AG04449 (cell line): ENCODE measurements at regions of chr9 and their contacts with region 1.

Region 1: GRCh38 chr9:22119537-22120158 is 110.5 kb upstream of the CDKN2B start:
- DNase-seq: no peak
- H3K4me3 ChIP-seq: no peak overlapping the region
- CTCF ChIP-seq: peak; percentile 51

Region 2: DNA sequence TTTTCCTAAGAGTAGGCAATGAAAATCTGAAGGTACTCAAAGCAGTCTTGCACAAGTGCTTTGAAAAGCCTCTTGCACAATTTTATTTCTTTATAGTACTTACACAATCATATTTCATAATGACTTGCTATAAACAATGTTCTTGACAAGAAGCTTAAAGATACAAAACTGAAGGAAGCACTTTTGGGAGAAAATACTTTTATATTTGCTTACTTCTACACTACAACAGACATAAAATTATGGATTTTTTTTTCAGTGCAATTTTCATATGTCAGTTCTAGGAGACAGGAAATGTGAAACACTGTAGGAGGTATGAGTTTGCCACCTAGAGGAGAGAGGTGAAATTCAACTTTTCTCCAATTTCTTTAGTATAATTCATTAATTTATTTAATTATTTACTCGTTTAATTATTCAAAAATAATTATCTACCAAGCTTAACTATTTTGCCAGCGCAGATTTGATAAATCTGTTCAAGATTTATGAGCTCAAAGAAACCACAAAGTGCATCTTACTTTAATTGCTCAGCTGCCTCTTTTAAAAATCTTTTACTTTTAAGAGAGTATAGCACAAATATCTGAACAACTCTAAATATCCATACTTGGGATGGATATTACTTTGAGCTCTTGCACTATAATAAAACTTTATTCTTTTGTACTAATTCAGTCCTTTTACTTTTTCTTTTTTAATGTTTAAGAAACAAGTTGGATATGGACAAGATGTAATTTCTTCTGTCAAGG is 81.5 kb before region 1 on chr9:
- CTCF ChIA-PET with region 1: interaction called, 34 read pairs
- POLR2A ChIA-PET with region 1: no interaction called
- DNase-seq: no peak
- H3K4me3 ChIP-seq: no peak overlapping the region
- CTCF ChIP-seq: peak; percentile 9

Region 3: GRCh38 chr9:22052376-22052945 is 67.2 kb before region 1 on chr9:
- CTCF ChIA-PET with region 1: interaction called, 10 read pairs
- POLR2A ChIA-PET with region 1: no interaction called
- DNase-seq: peak; percentile 76
- H3K4me3 ChIP-seq: no peak overlapping the region
- CTCF ChIP-seq: no peak

Region 4: DNA sequence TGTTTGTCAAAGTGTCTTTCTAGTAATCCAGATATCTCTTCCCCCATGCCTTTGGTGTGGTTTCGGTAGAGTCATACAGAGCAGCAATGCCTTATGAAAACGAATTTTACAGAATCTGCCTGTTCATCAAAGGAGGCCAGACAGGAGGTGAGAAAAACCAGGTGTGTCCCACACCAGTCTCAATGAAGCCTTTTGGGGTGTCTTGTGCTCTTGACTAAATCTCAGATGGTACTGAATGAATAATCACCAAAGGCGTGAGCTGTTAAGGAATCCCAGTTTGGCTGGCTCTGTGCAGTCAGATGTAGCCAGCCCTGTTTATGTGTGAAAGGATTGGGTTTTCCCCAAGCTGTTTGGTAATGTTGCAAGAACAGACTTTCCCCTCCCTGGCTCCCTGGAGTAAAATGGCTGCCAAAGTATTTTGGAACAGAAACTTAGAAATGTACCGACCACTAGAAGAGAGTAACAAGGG is 39.7 kb before region 1 on chr9:
- CTCF ChIA-PET with region 1: no interaction called
- POLR2A ChIA-PET with region 1: no interaction called
- DNase-seq: peak; percentile 67
- H3K4me3 ChIP-seq: no peak overlapping the region
- CTCF ChIP-seq: no peak

Region 5: GRCh38 chr9:22105005-22105722 is 14.5 kb before region 1 on chr9:
- CTCF ChIA-PET with region 1: interaction called, 51 read pairs
- POLR2A ChIA-PET with region 1: interaction called, 8 read pairs
- DNase-seq: no peak
- H3K4me3 ChIP-seq: no peak overlapping the region
- CTCF ChIP-seq: no peak

Region 6: GRCh38 chr9:22136451-22137163 is 17.0 kb after region 1 on chr9:
- CTCF ChIA-PET with region 1: interaction called, 39 read pairs
- POLR2A ChIA-PET with region 1: no interaction called
- DNase-seq: peak; percentile 89
- H3K4me3 ChIP-seq: no peak overlapping the region
- CTCF ChIP-seq: no peak

Region 7: DNA sequence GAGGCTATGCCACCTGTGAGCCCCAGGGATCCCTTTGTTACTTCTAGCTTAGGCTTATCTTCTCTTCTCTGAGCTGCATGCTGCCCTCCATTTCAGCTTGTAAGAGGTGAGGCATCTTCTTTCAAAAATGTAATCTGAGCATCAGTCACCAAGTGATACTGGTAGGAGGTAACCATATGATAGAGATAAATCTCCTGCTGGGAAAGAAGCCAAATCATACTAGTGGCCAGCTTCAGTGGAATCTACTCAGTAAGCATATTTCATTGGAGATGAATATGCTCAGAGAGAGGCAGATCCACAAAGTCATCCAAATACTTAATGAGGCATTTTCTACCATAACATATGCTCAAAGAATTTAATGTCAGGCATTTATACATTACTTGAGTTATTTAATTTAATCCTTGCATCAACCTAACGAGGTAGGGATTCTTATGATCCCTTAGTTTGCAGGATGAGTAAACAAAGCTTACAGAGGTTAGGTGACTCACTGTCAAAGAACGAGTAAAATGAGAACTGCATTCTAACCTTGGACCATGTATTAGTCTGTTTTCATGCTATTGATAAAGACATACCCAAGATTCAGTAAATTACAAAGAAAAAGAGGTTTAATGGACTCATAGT is 276.0 kb after region 1 on chr9:
- CTCF ChIA-PET with region 1: no interaction called
- POLR2A ChIA-PET with region 1: no interaction called
- DNase-seq: no peak
- H3K4me3 ChIP-seq: no peak overlapping the region
- CTCF ChIP-seq: no peak